Psoas muscle (tissue), 8 donors: ENCODE measurements at regions of chr7 and their contacts with region 1.

Region 1: DNA sequence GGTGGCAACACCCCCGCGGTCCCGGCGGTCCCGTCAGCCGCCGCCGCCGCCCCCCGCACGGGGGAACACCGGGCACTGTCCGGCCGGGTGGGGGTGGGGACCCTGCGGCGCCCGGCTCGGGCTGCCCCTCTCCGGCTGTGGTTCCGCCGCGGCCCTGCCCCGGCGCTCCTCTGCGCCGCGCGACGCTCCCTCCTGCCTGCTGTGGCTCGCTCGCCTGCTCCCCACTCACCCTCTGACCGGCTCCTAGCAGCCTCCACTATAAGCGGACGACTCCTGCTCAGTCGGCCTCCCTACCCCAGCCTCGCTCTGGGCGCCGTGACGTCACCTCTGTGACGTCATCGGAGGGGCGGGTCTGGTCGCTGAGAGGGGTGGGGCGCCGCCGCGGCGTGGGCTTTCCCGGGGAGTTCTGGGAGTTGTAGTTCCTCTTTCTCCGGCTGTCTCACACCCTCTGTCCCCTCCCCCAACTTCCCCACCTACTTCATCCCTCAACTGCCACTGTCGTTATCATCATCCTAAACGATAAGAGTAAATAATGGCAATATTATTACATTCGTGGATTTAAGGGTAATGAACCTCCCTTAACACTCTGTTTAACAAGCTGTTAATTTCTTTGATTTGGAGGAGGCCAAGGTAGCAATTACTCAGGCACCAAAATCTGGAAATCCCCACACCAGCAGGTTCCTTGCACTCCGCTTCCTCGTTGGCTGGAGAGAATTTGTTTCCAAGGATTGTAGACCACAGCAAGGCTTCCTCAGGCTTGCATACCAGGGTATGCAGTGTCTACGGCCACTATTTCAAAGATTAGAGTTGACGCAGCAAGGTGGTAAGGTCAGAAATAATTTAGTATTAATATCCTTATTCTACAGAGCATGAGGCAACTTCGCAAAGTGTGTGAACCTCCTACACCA is at the start of gene UBE2H:
- DNase-seq: peak; percentile 92 to 96
- ATAC-seq: peak; percentile 83 to 91 (median 86)
- H3K4me3 ChIP-seq: peak within 1 kb of the TSS; percentile 97
- H3K27ac ChIP-seq: peak within 1 kb of the TSS; percentile 98
- H3K4me1 ChIP-seq: peaks cover 12% of the 10 kb centered on the region
- H3K27me3 ChIP-seq: no peaks in the 10 kb centered on the region
- CTCF ChIP-seq: no peak
- total RNA-seq, gene UBE2H: 75.9 to 111 (median 77.4) TPM

Region 2: DNA sequence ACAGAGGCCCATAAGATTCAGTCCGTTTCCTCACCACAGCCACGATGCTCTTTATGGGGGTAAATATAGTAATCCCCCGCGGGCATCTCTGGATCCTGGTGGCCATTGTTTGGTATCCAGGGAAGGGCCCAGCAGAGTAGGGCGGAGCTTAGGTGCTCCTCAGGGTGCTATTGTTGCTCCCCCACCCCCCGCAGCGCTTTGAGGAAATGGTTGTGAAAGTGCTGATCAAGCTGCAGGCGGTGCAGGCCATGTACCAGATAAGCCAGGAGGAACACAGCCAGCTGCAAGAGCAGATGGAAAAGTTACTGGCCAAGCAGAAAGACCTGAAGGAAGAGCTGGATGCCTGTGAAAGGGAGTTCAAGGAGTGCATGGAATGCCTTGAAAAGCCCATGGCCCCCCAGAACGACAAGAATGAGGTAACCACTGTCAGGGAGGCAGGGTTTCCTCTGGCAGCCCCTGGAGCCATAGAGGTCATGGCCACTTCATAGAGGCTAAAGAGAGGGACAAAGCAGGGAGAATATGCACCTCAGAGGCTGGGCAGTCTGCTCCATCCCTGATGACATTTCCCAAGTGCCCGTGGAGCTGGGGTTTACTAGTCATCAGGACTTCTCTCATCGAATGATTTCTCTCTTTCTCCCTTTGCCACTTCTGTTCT is 1140.3 kb before region 1 on chr7:
- intact Hi-C with region 1: no loop called
- DNase-seq: peak; percentile 47 to 70
- ATAC-seq: peak in 3 of 4 donors; percentile 43 to 74 (median 68)
- H3K4me3 ChIP-seq: no peak overlapping the region
- H3K27ac ChIP-seq: no peak overlapping the region
- H3K4me1 ChIP-seq: peaks cover 25% of the 10 kb centered on the region
- H3K27me3 ChIP-seq: no peaks in the 10 kb centered on the region
- CTCF ChIP-seq: no peak

Region 3: GRCh38 chr7:129875745-129876411 is 77.0 kb before region 1 on chr7:
- intact Hi-C with region 1: loop called in 1 of 2 experiments (anchors 5 kb)
- DNase-seq: no peak
- ATAC-seq: peak; percentile 48 to 80 (median 76)
- H3K4me3 ChIP-seq: peak overlapping the region; percentile 43
- H3K27ac ChIP-seq: peak overlapping the region; percentile 60
- H3K4me1 ChIP-seq: peaks cover 43% of the 10 kb centered on the region
- H3K27me3 ChIP-seq: no peaks in the 10 kb centered on the region
- CTCF ChIP-seq: no peak

Region 4: DNA sequence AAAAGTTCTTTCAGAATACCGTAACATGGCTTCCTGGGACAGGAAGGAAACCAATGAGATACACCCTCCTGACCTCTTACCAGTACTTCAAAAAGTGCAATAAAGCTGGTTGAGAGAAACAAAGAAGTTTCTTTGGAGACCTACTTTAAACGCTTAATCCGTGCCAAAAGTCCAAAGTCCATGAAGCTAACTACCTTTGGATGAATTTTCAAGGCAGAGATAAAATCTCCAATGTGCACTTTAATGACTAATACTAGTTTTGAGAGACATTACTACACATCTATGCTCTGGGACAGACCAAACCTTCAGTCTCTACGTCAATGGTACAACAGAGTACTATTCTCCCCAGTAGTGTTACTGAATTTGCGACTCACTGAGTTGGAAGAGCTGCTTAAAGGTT is 46.2 kb before region 1 on chr7:
- intact Hi-C with region 1: loop called (anchors 5 kb)
- DNase-seq: no peak
- ATAC-seq: peak in 2 of 4 donors; percentile 39 to 48
- H3K4me3 ChIP-seq: no peak overlapping the region
- H3K27ac ChIP-seq: peak overlapping the region; percentile 38
- H3K4me1 ChIP-seq: peaks cover 73% of the 10 kb centered on the region
- H3K27me3 ChIP-seq: no peaks in the 10 kb centered on the region
- CTCF ChIP-seq: no peak

Region 5: GRCh38 chr7:129914536-129915272 is 38.2 kb before region 1 on chr7:
- intact Hi-C with region 1: loop called (anchors 5 kb)
- DNase-seq: no peak
- ATAC-seq: peak in 2 of 4 donors; percentile 49 to 64
- H3K4me3 ChIP-seq: peak overlapping the region; percentile 31
- H3K27ac ChIP-seq: peak overlapping the region; percentile 67
- H3K4me1 ChIP-seq: peaks cover 74% of the 10 kb centered on the region
- H3K27me3 ChIP-seq: no peaks in the 10 kb centered on the region
- CTCF ChIP-seq: no peak

Region 6: DNA sequence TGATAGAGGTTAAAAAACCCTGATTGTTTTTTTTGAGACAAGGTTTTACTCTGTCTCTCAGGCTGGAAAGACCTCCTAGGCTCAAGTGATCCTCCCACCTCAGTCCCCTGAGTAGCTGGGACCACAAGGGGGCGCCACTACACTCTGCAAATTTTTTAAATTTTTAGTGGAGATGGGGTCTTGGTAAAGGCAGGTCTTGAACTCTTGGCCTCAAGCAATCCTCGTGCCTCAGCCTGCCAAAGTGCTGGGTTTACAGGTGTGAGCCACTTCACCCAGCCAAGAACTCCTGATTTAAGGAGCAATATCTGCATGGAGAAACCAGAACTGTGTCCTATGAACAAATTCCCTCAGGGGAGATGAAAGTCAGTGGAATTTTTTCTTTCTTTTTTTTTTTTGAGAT is 110.1 kb after region 1 on chr7:
- intact Hi-C with region 1: no loop called
- DNase-seq: peak in 1 of 2 donors; percentile 29
- ATAC-seq: no peak
- H3K4me3 ChIP-seq: no peak overlapping the region
- H3K27ac ChIP-seq: no peak overlapping the region
- H3K4me1 ChIP-seq: peaks cover 5% of the 10 kb centered on the region
- H3K27me3 ChIP-seq: no peaks in the 10 kb centered on the region
- CTCF ChIP-seq: peak; percentile 39

Region 7: DNA sequence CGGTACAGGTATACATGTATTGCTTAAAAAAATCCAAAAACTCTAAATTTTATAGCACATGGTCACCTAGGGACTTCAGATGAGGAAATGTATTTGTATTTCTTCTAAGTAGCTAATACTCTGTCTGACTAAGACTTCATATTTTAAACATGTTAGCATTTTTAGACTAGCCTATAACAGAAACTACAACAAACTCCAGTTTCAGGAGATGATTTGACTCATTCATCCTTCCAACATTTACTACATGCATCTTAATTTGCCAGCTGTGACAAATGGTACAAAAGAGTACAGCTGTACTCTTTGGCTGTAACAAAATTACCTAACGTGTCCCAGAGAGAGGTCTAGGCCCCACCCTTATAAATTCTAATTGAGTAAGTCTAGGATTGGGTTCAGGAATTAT is 230.1 kb after region 1 on chr7:
- intact Hi-C with region 1: no loop called
- DNase-seq: no peak
- ATAC-seq: no peak
- H3K4me3 ChIP-seq: no peak overlapping the region
- H3K27ac ChIP-seq: no peak overlapping the region
- H3K4me1 ChIP-seq: no peaks in the 10 kb centered on the region
- H3K27me3 ChIP-seq: no peaks in the 10 kb centered on the region
- CTCF ChIP-seq: no peak